PC-3 (cell line): ENCODE measurements at regions of chr2 and their contacts with region 1.

Region 1: GRCh38 chr2:202056392-202057010 is 16.6 kb upstream of the KIAA2012 start:
- DNase-seq: peak; percentile 57
- ATAC-seq: peak; percentile 77
- H3K4me3 ChIP-seq: no peak overlapping the region
- H3K27ac ChIP-seq: no peak overlapping the region
- H3K4me1 ChIP-seq: no peaks in the 10 kb centered on the region
- H3K27me3 ChIP-seq: peaks cover 18% of the 10 kb centered on the region; the same call in 1 of the 2 replicates
- CTCF ChIP-seq: peak; percentile 80

Region 2: DNA sequence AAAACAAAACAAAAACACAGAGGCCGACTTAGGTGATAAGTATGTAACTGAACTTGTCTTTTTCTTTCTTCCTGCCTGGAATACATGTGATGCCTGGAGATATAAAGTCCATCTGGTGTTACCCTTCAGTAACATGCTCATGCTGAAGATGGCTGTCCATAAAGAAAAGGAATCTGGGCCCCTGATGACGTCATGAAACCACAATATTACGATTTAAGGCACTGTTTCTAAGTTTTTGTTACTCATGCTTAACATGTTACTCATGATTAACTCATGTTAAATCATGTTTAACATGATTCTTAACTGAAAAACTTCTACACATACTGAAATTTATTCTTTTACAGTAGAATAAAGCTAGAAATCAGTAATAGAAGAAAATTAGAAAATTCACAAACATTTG is 556.0 kb before region 1 on chr2:
- CTCF ChIA-PET with region 1: no interaction called
- POLR2A ChIA-PET with region 1: no interaction called
- intact Hi-C with region 1: no loop called
- DNase-seq: peak; percentile 30
- ATAC-seq: no peak
- H3K4me3 ChIP-seq: no peak overlapping the region
- H3K27ac ChIP-seq: no peak overlapping the region
- H3K4me1 ChIP-seq: no peaks in the 10 kb centered on the region
- H3K27me3 ChIP-seq: no peaks in the 10 kb centered on the region
- CTCF ChIP-seq: no peak

Region 3: GRCh38 chr2:201964631-201965206 is 91.8 kb before region 1 on chr2:
- CTCF ChIA-PET with region 1: no interaction called
- POLR2A ChIA-PET with region 1: no interaction called
- intact Hi-C with region 1: loop called (anchors 10 kb)
- DNase-seq: no peak
- ATAC-seq: no peak
- H3K4me3 ChIP-seq: no peak overlapping the region
- H3K27ac ChIP-seq: no peak overlapping the region
- H3K4me1 ChIP-seq: no peaks in the 10 kb centered on the region; the same call in 1 of the 2 replicates
- H3K27me3 ChIP-seq: no peaks in the 10 kb centered on the region
- CTCF ChIP-seq: no peak

Region 4: DNA sequence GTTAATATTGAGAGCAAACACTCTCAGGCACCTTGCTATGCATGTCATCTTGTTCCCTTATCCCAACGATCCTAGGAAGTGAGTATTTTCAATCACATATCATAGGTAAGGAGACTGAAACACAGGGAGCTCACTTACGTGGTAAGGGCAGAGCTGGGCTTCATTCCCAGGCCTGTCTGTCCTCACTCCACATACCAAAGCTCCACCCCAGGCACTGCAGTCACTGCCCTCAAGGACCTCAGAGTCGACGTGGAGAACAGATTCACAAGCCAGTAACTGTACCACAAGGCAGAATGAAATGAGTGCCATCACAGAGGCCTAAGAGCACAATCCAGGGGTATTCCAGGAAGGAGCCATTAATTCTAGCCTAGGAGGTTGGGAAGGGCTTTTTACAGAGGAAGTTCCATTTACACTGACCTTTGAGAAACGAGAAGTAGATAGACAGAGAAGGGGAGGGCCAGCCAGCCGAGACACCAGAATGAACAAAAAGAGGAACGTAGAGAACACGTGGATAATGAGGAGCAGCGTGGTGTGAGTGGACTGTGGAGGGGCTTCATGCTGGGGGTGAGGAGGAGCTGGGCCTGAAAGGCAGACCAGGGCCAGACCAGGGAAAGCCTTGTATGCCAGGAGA is 65.1 kb after region 1 on chr2:
- CTCF ChIA-PET with region 1: no interaction called
- POLR2A ChIA-PET with region 1: no interaction called
- intact Hi-C with region 1: no loop called
- DNase-seq: no peak
- ATAC-seq: no peak
- H3K4me3 ChIP-seq: no peak overlapping the region
- H3K27ac ChIP-seq: no peak overlapping the region
- H3K4me1 ChIP-seq: no peaks in the 10 kb centered on the region
- H3K27me3 ChIP-seq: no peaks in the 10 kb centered on the region
- CTCF ChIP-seq: no peak